Colonic mucosa (tissue), 4 donors: ENCODE measurements at regions of chr11 and their contacts with region 1.

Region 1: DNA sequence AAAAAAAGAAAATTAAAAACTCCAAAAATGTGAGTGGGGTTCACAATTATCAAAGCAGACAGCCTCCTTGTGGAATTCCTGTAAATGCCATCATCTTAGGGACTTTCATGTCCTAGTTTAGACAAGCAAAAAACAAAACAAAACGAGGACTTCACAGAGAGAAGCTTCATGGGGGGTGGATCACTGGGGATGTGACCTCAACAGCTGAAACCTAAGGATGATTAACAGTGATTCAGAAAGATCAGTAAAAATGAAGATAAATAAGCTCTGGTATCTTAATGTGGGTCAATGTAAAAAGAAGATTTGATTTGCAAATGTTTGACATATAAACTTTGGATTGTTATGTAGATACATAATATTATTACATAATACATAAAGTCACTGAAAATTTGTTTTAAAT is 8.1 kb upstream of the OR10W1 start:
- DNase-seq: no peak
- H3K4me3 ChIP-seq: no peak overlapping the region
- H3K27ac ChIP-seq: no peak overlapping the region
- H3K4me1 ChIP-seq: no peaks in the 10 kb centered on the region
- H3K27me3 ChIP-seq: no peaks in the 10 kb centered on the region
- CTCF ChIP-seq: no peak

Region 2: DNA sequence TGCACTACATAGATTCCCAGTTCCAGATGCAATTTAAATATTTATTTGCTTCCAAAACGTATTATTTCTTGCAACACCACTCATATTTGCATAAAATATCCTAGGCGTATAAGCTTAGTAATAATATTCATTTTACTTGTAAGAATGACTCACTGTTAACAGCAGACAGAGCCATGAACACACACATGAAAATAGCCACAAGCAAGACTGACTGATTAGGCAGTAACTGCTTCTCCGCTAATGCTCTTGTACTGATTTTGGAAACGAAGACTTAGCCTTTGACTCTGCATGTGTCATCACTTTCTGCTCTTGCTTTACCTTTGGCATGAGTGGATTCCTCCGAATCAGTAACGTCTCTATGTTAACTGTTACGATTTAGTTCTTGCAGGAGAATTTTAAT is 53.4 kb before region 1 on chr11:
- intact Hi-C with region 1: loop called (anchors 10 kb)
- DNase-seq: no peak
- H3K4me3 ChIP-seq: no peak overlapping the region
- H3K27ac ChIP-seq: no peak overlapping the region
- H3K4me1 ChIP-seq: no peaks in the 10 kb centered on the region
- H3K27me3 ChIP-seq: no peaks in the 10 kb centered on the region
- CTCF ChIP-seq: no peak